ENCODE measurements at regions of chr12 and their contacts with region 1.

Region 1: GRCh38 chr12:50074936-50075807 is 10.0 kb upstream of the SMARCD1 start:
- DNase-seq: no peak
- H3K4me3 ChIP-seq: no peak overlapping the region
- CTCF ChIP-seq: peak; percentile 89

Region 2: GRCh38 chr12:49945394-49946080 is 129.6 kb before region 1 on chr12:
- CTCF ChIA-PET with region 1: interaction called, 14 read pairs
- POLR2A ChIA-PET with region 1: no interaction called
- DNase-seq: peak; percentile 12
- H3K4me3 ChIP-seq: peak overlapping the region; percentile 28
- CTCF ChIP-seq: peak; percentile 96

Region 3: GRCh38 chr12:50006789-50007436 is 68.3 kb before region 1 on chr12:
- CTCF ChIA-PET with region 1: interaction called, 12 read pairs
- POLR2A ChIA-PET with region 1: interaction called, 3 read pairs
- DNase-seq: no peak
- H3K4me3 ChIP-seq: no peak overlapping the region
- CTCF ChIP-seq: no peak

Region 4: GRCh38 chr12:50050410-50051098 is 24.6 kb before region 1 on chr12:
- CTCF ChIA-PET with region 1: interaction called, 96 read pairs
- POLR2A ChIA-PET with region 1: interaction called, 3 read pairs
- DNase-seq: no peak
- H3K4me3 ChIP-seq: peak overlapping the region; percentile 16; the same call in 1 of the 2 replicates
- CTCF ChIP-seq: no peak

Region 5: DNA sequence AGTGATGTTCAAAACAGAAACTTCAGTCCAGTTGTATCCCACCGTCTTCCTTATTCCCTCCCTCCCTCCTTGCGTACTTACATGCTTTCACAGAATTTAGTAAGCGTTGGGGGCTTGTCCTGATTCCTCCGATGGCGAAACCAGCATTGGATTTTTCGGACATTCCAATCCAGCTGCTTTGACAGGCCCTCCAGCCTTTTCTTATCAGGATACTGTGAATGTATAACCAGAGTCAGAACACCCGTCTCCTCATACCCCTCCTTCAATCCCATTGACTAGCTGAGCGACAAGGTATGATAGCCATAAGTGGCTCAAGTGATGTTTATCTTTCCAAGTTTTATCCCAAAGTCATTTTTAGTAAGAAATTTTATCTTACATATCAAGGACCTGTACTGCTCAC is 67.8 kb after region 1 on chr12:
- CTCF ChIA-PET with region 1: no interaction called
- POLR2A ChIA-PET with region 1: no interaction called
- DNase-seq: no peak
- H3K4me3 ChIP-seq: no peak overlapping the region
- CTCF ChIP-seq: no peak

Region 6: DNA sequence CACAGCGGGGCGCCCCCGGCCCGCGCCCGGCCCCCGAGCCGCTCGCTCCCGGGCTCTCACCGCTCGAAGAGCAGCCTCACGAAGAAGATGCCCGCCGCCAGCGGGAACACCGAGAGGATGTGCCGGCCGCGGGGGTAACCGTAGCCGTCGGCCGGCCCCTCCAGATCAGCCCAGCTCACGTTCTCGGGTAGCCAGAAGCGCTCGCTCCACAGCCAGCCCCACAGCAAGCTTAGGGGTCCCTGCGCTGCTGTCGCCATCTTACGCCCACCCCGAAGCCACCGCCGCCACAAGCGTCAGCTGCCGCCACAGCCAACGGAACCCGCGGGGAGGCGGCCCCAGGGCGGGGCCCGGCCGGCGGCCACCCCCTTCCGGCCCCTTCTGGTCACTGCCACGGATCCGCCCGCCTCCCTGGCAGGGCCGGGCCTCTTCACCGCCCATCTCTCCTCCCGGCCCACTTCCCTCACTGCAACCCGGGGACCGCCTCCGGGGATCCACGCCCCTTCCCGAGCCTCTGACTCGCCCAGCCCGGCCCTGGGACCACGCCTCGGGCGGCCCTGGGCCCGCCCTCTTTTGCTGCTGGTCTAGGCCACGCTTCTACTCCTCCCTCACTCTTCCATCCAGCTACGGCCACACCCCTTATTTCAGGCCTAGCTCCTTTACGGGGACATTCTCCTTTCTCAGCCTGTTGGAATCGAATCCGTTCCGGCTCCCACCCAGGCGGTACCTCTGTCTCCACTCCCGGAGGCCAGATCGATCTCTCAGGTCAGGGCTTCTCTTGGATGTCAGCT is 92.1 kb after region 1 on chr12 and contains the start of gene CERS5:
- CTCF ChIA-PET with region 1: interaction called, 20 read pairs
- POLR2A ChIA-PET with region 1: no interaction called
- DNase-seq: peak; percentile 87
- H3K4me3 ChIP-seq: peak within 1 kb of the TSS; percentile 85
- CTCF ChIP-seq: peak; percentile 16

Measured in AG04449 (cell line).